Common myeloid progenitor, CD34-positive (primary cell): ENCODE measurements at regions of chr2 and their contacts with region 1.

Region 1: DNA sequence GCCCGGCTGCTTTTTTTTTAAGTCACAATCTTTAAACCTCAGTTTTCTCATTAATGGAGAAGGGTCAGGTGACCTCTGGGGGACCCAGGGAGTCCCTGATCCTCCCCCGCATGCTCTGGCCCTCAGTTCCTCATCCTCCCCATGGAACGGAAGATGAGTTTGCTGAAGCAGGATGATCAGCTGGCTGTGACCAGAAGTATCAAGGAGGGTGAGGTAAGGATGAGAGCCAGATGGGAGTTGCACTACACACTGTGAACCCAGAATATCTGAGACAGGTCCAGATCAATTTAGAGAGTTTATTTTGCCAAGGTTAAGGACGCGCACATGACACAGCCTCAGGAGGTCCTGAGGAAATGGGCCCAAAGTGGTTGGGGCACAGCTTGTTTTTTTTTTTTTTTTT is 3.8 kb downstream of the CATIP start:
- DNase-seq: peak in 2 of 3 donors; percentile 43 to 44
- H3K4me3 ChIP-seq: no peak overlapping the region
- H3K27ac ChIP-seq: no peak overlapping the region
- H3K4me1 ChIP-seq: peaks cover 0 to 17% (median 6%) of the 10 kb centered on the region in 4 experiments
- H3K27me3 ChIP-seq: no peaks in the 10 kb centered on the region

Region 2: DNA sequence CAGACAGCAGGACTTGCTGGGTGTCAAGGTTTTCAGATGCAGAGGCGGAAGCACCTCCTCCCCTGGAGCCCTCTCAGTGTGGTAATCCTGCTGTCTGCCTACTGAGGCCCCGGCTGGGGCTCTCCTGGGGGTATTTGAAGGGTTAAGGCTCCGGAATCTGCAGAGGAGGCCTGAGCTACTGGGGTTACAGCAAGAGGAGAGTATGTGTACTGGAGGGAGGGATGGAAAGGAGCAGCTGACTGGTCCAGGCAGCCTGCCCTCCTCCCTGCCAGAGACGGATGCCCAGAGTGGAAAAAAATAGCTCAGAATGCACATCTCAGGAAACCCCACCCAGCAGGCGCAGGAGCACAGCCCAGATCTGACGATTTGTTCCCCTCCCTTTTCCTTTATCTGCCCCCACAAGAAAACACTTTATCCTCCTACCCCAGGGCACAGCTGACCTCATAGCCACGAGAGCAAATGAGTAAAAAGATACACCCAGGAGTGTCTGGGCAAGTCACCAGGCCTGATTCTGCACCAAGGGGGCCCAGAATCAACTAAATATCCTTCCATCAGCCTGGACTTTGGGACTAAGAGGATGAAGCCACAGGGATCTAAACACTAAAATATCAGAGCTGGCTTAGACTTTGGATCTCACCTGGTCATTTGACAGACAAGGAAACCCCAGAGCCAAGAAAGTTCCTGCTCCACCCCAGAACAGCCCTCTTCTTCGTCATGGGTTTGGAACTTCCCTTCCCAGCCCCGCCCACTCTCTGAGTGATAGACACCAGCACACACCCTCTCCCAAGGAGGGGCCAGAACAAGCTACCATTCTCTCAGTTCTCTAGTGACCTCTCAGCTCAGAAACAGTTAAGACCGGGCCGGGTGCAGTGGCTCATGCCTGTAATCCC is 73.6 kb before region 1 on chr2:
- CTCF ChIA-PET with region 1: interaction called, 451 read pairs
- POLR2A ChIA-PET with region 1: no interaction called
- DNase-seq: peak; percentile 88 to 94 (median 92)
- H3K4me3 ChIP-seq: peak overlapping the region in 6 of 7 experiments; percentile 2 to 68 (median 53)
- H3K27ac ChIP-seq: peak overlapping the region; percentile 89 to 91
- H3K4me1 ChIP-seq: peaks cover 26 to 77% (median 71%) of the 10 kb centered on the region in 4 experiments
- H3K27me3 ChIP-seq: no peaks in the 10 kb centered on the region

Region 3: GRCh38 chr2:218312267-218312756 is 48.1 kb before region 1 on chr2:
- CTCF ChIA-PET with region 1: interaction called, 451 read pairs
- POLR2A ChIA-PET with region 1: no interaction called
- DNase-seq: no peak
- H3K4me3 ChIP-seq: no peak overlapping the region
- H3K27ac ChIP-seq: no peak overlapping the region
- H3K4me1 ChIP-seq: peaks cover 14 to 47% (median 28%) of the 10 kb centered on the region in 4 experiments
- H3K27me3 ChIP-seq: no peaks in the 10 kb centered on the region

Region 4: GRCh38 chr2:218322895-218323808 is 37.3 kb before region 1 on chr2:
- CTCF ChIA-PET with region 1: interaction called, 212 read pairs
- POLR2A ChIA-PET with region 1: interaction called, 3 read pairs
- DNase-seq: peak; percentile 86 to 93 (median 89)
- H3K4me3 ChIP-seq: peak overlapping the region; percentile 45 to 97 (median 86)
- H3K27ac ChIP-seq: peak overlapping the region; percentile 64 to 84
- H3K4me1 ChIP-seq: peaks cover 7 to 84% (median 76%) of the 10 kb centered on the region in 4 experiments
- H3K27me3 ChIP-seq: no peaks in the 10 kb centered on the region

Region 5: GRCh38 chr2:218343591-218343990 is 16.9 kb before region 1 on chr2:
- CTCF ChIA-PET with region 1: interaction called, 212 read pairs
- POLR2A ChIA-PET with region 1: no interaction called
- DNase-seq: no peak
- H3K4me3 ChIP-seq: no peak overlapping the region
- H3K27ac ChIP-seq: no peak overlapping the region
- H3K4me1 ChIP-seq: no peaks in the 10 kb centered on the region
- H3K27me3 ChIP-seq: no peaks in the 10 kb centered on the region

Region 6: GRCh38 chr2:218381916-218382366 is 21.5 kb after region 1 on chr2 and contains the start of gene SLC11A1:
- CTCF ChIA-PET with region 1: interaction called, 12 read pairs
- POLR2A ChIA-PET with region 1: no interaction called
- DNase-seq: no peak
- H3K4me3 ChIP-seq: peak within 1 kb of the TSS in 1 of 7 experiments; percentile 51
- H3K27ac ChIP-seq: no peak within 1 kb of the TSS
- H3K4me1 ChIP-seq: peaks cover 0 to 4% (median 1%) of the 10 kb centered on the region in 4 experiments
- H3K27me3 ChIP-seq: no peaks in the 10 kb centered on the region